PC-9 (cell line): ENCODE measurements at regions of chr10 and their contacts with region 1.

Region 1: DNA sequence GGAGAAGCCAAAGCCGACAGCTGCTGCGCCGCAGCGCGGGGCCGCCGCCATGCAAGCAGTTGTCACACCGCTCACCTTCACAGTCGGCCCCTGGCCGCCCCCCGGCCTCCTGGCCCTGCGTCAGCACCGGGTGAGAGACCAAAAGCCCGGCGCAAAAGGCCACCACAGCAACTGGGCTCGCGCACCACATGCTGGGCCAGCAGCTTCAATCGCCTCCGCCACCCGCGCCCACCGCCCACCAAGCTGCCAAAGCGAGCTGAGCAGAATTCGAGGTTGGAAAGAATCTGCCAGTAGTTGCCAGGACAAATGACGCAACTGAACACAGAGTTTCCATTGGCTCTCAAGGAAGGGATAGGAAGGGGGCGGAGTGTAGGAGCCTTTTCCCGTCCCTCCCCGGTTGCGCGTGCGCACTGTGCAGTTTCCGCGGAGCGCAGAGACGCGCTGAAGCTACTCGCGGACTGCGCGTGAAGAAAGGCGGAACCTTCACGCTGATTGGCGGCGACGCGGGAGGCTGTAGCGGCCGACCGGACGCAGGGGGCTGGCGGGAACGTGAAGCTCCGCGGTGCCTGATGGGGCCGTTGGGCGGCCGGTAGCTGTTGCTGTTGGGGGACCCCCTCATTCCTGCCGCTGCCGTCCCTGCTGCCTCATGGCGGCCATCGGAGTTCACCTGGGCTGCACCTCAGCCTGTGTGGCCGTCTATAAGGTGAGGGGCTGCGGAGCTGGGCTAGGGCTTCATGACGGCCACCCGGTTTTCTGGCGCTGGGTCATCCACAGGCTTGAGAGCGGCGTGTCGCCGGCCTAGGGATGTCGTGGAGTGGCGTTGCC is at the starts of genes CDNF, HSPA14 and MSANTD7:
- DNase-seq: peak; percentile 94 to 99
- H3K4me3 ChIP-seq: peak within 1 kb of the TSS; percentile 80
- H3K27ac ChIP-seq: peak within 1 kb of the TSS; percentile 60
- H3K4me1 ChIP-seq: peaks cover 14% of the 10 kb centered on the region
- H3K27me3 ChIP-seq: no peaks in the 10 kb centered on the region
- CTCF ChIP-seq: no peak
- total RNA-seq, gene CDNF: 0.48 and 1.2 TPM in 2 replicates
- total RNA-seq, gene HSPA14: 13.9 and 23.1 TPM in 2 replicates
- total RNA-seq, gene MSANTD7: 8.5 and 11.6 TPM in 2 replicates

Region 2: DNA sequence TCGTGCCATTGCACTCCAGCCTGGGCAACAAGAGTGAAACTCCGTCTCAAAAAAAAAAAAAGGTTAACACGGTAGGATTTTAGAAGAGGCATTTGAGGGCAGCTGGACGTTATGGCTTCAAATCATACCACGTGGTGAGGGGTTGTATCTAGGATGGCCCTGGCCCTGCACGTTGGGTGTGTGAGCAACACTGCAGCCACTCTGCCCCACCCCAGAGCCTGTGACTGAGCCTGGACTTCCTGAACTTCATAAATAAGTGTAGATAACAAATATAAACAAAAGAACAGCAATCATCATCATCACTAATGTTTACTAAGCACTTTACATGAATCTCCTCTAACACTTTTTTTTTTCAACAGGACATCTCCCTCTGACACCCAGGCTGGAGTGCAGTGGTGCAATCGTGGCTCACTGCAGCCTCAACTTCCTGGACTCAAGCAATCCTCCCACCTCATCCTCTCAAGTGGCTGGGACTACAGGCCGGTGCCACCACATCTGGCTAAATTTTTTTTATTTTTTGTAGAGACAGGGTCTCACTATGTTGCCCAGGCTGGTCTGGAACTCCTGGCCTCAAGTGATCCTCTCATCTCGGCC is 337.7 kb before region 1 on chr10:
- CTCF ChIA-PET with region 1: no interaction called
- POLR2A ChIA-PET with region 1: no interaction called
- intact Hi-C with region 1: loop called (anchors 5 kb)
- DNase-seq: peak in 1 of 2 experiments; percentile 46
- H3K4me3 ChIP-seq: no peak overlapping the region
- H3K27ac ChIP-seq: no peak overlapping the region
- H3K4me1 ChIP-seq: no peaks in the 10 kb centered on the region
- H3K27me3 ChIP-seq: no peaks in the 10 kb centered on the region
- CTCF ChIP-seq: no peak

Region 3: DNA sequence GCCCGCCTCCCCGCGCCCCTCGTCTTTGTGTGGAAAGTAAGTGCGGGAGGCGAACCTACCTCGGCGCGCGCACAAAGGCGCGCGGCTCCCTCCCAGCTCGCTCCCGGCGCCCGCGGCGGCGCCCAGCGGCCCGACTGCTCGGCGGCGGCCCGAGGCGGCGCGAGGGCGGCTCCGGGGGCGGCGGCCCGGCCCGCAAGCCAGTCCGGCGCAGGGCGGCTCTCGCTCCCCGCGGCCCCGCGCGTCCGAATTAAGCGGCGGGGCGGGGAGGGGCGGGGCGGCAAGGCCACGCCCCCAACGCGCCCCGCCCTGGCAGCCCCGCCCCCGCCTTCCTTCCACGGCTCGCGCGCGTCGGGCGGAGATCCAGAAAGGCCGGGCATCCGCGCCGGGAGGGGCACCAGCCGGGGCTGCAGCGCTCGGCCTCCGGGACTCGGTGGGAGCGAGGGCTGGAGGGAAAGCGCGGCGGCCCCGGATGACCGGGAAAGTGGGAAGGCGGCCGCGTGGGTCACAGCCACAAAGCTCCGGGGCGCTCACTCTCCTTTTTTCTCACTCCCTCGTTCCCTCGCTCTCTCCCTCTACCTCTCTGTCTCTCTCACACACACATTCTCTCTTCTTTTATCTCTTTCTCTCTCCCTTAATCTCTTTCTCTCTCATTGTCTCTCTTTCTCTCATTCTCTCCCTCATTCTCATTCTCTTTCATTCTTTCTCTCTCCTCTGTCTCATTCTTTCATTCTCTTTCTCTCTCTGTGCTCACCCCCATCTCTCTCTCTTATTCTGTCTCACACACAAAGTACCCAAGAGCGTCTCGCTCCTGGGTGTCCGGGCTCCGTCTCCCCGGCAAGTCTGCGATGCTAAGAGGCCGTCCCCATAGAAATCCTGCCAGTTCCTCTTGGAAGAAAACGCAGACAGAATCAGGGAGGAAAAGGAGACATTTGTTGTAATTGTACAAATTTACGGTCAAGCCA is 233.5 kb before region 1 on chr10:
- CTCF ChIA-PET with region 1: no interaction called
- POLR2A ChIA-PET with region 1: interaction called, 3 read pairs
- intact Hi-C with region 1: loop called (anchors 2 kb)
- DNase-seq: peak in 1 of 2 experiments; percentile 81
- H3K4me3 ChIP-seq: peak overlapping the region; percentile 81
- H3K27ac ChIP-seq: peak overlapping the region; percentile 95
- H3K4me1 ChIP-seq: peaks cover 29% of the 10 kb centered on the region
- H3K27me3 ChIP-seq: no peaks in the 10 kb centered on the region
- CTCF ChIP-seq: no peak

Region 4: GRCh38 chr10:14822879-14823755 is 14.9 kb before region 1 on chr10:
- CTCF ChIA-PET with region 1: interaction called, 3 read pairs
- POLR2A ChIA-PET with region 1: interaction called, 15 read pairs
- intact Hi-C with region 1: no loop called
- DNase-seq: peak in 1 of 2 experiments; percentile 37
- H3K4me3 ChIP-seq: no peak overlapping the region
- H3K27ac ChIP-seq: no peak overlapping the region
- H3K4me1 ChIP-seq: peaks cover 27% of the 10 kb centered on the region
- H3K27me3 ChIP-seq: no peaks in the 10 kb centered on the region
- CTCF ChIP-seq: peak; percentile 74

Region 5: GRCh38 chr10:14889318-14889717 is 51.3 kb after region 1 on chr10:
- CTCF ChIA-PET with region 1: no interaction called
- POLR2A ChIA-PET with region 1: no interaction called
- intact Hi-C with region 1: no loop called
- DNase-seq: no peak
- H3K4me3 ChIP-seq: no peak overlapping the region
- H3K27ac ChIP-seq: no peak overlapping the region
- H3K4me1 ChIP-seq: no peaks in the 10 kb centered on the region
- H3K27me3 ChIP-seq: no peaks in the 10 kb centered on the region
- CTCF ChIP-seq: no peak; the same call in 1 of the 2 replicates

Region 6: DNA sequence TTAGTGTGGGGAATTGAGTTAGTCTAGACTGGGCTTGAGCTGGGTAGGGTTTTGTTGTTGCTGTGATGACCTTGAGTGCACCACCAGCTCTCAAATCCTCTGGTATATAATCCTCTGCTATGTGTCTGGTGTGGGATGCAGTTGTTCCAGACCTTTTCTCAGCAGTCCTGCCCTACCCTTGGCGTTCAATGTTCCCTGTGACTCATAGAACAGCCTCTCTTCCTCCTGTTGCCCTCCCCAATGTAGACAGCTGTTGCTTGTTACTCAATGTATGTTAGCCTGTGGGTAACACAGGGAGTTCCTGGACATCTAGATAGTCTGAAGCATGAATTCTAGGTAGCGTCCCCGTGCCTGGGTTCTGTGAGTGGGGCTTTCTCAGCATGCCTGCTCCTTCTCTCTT is 230.8 kb after region 1 on chr10:
- CTCF ChIA-PET with region 1: no interaction called
- POLR2A ChIA-PET with region 1: no interaction called
- intact Hi-C with region 1: no loop called
- DNase-seq: peak in 1 of 2 experiments; percentile 1
- H3K4me3 ChIP-seq: no peak overlapping the region
- H3K27ac ChIP-seq: no peak overlapping the region
- H3K4me1 ChIP-seq: no peaks in the 10 kb centered on the region
- H3K27me3 ChIP-seq: no peaks in the 10 kb centered on the region
- CTCF ChIP-seq: no peak

Region 7: GRCh38 chr10:15097011-15097812 is 259.2 kb after region 1 on chr10 and contains the start of gene RPP38:
- CTCF ChIA-PET with region 1: no interaction called
- POLR2A ChIA-PET with region 1: no interaction called
- intact Hi-C with region 1: loop called (anchors 5 kb)
- DNase-seq: peak; percentile 87 to 95
- H3K4me3 ChIP-seq: peak within 1 kb of the TSS; percentile 87
- H3K27ac ChIP-seq: peak within 1 kb of the TSS; percentile 92
- H3K4me1 ChIP-seq: peaks cover 9% of the 10 kb centered on the region
- H3K27me3 ChIP-seq: no peaks in the 10 kb centered on the region
- CTCF ChIP-seq: no peak
- total RNA-seq, gene RPP38: 15.9 and 16.9 TPM in 2 replicates